Activated naive CD4-positive, alpha-beta T cell treated with anti-CD3 and anti-CD28 coated beads for 36 hours (primary cell): ENCODE measurements at regions of chr10 and their contacts with region 1.

Region 1: DNA sequence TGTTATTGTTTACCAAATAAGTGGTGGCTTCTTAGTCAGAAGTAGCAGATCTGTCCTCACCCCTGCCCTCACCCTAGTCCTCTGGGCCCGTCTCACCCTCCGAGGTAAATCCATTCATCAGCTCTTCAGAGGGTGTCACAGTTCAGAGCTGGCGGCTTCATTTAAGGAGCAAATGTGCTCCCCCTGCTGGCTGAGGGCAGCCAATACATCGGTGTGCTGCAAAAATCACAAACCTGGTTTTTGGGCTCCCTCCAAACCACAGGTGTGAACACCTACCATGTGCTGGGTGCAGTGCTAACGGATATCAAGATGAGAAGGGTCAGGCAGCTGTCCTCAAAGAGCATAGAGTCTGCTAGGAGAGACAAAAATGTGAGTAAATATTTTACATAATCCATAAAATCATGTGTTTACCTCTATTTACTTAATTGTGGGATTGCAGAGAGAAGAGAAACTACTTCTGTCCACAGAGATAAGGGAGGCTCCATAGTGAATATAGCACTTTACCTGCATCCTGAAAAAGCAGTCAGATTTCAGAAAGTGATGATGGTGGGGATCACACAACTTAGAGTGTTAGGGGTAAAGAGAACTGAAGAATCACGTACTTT is 15.5 kb upstream of the CRTAC1 start:
- DNase-seq: peak; percentile 75
- H3K4me3 Mint-ChIP-seq: no peak overlapping the region
- H3K27ac Mint-ChIP-seq: no peak overlapping the region
- H3K4me1 Mint-ChIP-seq: peaks cover 2% of the 10 kb centered on the region
- H3K27me3 Mint-ChIP-seq: peaks cover 26% of the 10 kb centered on the region

Region 2: DNA sequence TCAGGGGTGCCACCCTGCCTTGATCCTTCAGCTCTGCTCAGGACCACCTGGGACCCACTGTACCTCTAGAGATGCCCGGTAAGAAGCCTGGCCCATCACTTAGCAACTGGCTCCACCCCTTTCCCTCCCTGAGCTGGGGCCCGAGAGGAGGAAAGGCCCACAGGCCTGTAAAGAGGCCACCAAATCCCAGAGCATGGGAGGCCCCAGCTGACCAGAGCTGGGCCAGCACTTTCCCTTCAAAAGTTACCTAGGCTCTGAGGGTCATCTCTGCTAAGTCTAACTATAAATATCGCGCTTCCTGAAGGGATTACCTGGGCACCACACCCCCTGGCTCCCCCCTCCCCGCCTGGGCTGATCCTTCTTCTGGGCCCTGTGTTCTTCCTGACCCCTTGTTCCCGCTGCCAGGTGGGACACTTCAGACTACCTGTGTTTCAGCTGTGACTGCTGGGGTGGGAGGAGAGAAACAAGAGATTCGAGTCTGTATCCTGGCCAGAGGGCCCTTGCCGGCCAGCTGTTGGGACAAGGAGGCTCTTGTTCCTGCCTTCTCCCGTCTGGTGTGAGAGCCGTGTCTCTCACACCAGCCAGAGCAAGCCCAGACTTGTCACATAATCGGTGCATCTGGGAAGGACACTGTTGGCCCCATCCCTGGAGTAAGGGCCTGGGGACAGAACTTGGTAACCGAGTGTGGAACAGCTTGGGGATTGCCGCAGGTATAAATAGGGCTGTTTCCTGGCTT is 496.1 kb before region 1 on chr10:
- CTCF ChIA-PET with region 1: no interaction called
- intact Hi-C with region 1: no loop called
- DNase-seq: no peak
- H3K4me3 Mint-ChIP-seq: no peak overlapping the region
- H3K27ac Mint-ChIP-seq: peak overlapping the region; percentile 61
- H3K4me1 Mint-ChIP-seq: peaks cover 2% of the 10 kb centered on the region
- H3K27me3 Mint-ChIP-seq: no peaks in the 10 kb centered on the region

Region 3: DNA sequence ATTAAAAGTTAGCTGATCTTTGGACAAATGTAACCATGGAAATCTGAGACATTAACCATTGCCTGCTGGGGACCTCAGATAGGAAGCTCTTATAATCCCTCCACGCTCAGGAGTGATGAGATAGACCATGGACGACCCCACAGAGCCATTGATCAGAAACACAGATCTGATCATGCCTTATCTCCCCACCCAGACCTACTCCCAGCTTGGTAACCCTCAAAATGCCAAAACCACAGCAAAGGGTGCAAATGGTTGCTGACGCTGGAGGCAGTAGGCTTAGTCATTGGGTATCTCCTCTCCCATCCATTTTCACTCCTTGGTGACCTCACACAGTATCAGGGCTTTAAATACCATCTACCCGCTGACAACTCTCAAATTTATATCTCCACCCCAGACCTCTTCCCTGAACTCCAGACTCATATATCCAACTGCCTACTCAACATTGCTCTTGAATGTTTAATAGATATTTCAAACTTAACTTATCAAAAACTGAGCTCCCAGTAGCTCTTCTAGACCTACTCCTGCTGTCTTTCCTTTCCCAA is 76.3 kb before region 1 on chr10:
- CTCF ChIA-PET with region 1: interaction called, 10 read pairs
- intact Hi-C with region 1: no loop called
- DNase-seq: no peak
- H3K4me3 Mint-ChIP-seq: no peak overlapping the region
- H3K27ac Mint-ChIP-seq: no peak overlapping the region
- H3K4me1 Mint-ChIP-seq: no peaks in the 10 kb centered on the region
- H3K27me3 Mint-ChIP-seq: peaks cover 44% of the 10 kb centered on the region

Region 4: GRCh38 chr10:98028168-98028770 is 17.6 kb before region 1 on chr10:
- CTCF ChIA-PET with region 1: interaction called, 17 read pairs
- intact Hi-C with region 1: no loop called
- DNase-seq: peak; percentile 83
- H3K4me3 Mint-ChIP-seq: no peak overlapping the region
- H3K27ac Mint-ChIP-seq: no peak overlapping the region
- H3K4me1 Mint-ChIP-seq: peaks cover 4% of the 10 kb centered on the region
- H3K27me3 Mint-ChIP-seq: peaks cover 55% of the 10 kb centered on the region

Region 5: GRCh38 chr10:98285416-98285815 is 239.5 kb after region 1 on chr10:
- CTCF ChIA-PET with region 1: no interaction called
- intact Hi-C with region 1: no loop called
- DNase-seq: no peak
- H3K4me3 Mint-ChIP-seq: no peak overlapping the region
- H3K27ac Mint-ChIP-seq: no peak overlapping the region
- H3K4me1 Mint-ChIP-seq: no peaks in the 10 kb centered on the region
- H3K27me3 Mint-ChIP-seq: peaks cover 7% of the 10 kb centered on the region

Region 6: GRCh38 chr10:98309366-98310355 is 263.8 kb after region 1 on chr10:
- CTCF ChIA-PET with region 1: interaction called, 10 read pairs
- intact Hi-C with region 1: no loop called
- DNase-seq: peak; percentile 38
- H3K4me3 Mint-ChIP-seq: no peak overlapping the region
- H3K27ac Mint-ChIP-seq: no peak overlapping the region
- H3K4me1 Mint-ChIP-seq: peaks cover 4% of the 10 kb centered on the region
- H3K27me3 Mint-ChIP-seq: peaks cover 20% of the 10 kb centered on the region